ENCODE measurements at regions of chr14 and their contacts with region 1.

Region 1: DNA sequence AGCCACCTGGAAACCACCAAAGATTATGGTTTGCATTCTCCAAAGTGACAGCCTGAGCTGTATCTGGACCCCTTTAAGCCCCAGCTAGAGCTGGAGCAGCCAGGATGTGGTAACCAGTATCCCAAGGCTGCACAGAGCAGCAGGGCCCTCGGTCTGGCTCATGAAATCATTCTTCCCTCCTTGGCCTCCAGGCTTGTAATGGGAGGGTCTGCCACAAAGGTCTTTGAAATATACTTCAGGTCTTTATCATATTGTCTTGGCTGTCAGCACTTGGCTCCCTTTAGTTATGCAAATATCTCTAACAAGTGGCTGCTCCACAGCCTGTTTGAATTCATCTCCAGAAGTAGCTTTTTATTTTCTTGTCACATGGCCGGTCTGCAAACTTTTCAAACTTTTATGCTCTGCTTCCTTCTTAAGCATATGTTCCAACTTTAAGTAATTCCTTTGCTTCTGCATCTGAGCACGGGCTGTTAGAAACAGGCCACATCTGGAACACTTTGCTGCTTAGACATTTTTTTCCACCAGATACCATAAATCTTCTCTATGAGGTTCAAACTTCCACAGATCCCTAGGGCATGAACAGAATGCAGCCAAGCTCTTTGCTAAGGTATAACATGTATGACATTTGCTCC is 663.4 kb upstream of the MIS18BP1 start:
- DNase-seq: no peak
- H3K4me3 ChIP-seq: no peak overlapping the region
- H3K27ac ChIP-seq: no peak overlapping the region
- H3K4me1 ChIP-seq: no peaks in the 10 kb centered on the region; the same call in 1 of the 2 replicates
- H3K27me3 ChIP-seq: no peaks in the 10 kb centered on the region
- CTCF ChIP-seq: no peak

Region 2: DNA sequence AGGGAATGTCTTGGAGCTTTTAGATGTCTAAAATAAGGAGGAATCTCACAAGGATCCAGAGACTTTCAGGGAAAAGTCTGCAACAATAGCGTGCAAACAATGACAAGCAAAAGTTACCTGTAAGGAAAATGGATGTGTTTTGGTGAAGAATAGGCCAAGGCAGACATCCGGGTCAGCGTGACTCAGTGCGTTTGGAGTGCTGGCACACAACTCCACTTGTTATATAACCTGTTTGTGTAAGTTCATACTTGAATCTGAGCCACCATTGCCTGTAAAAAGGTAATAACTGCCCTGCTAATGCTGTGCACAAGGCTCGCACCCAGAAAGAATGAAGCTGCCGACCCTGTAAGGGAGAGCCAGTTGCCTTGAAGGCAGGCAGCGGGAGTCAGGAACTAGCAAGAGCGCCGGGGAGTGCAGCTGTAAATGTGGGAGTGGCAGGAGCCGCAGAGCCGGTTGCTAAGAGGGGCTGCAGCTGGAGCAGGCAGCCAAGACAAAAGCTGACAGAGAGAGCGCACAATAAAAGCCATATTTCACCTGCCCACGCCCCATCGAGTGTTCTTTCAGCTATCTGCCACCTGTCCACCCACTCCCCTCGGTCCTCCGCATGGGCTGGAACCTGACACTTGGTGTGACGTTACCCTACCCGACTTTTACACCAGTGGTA is 24.9 kb before region 1 on chr14:
- CTCF ChIA-PET with region 1: no interaction called
- POLR2A ChIA-PET with region 1: no interaction called
- intact Hi-C with region 1: loop called (anchors 1 kb)
- DNase-seq: peak in 1 of 2 experiments; percentile 26
- H3K4me3 ChIP-seq: no peak overlapping the region
- H3K27ac ChIP-seq: no peak overlapping the region
- H3K4me1 ChIP-seq: no peaks in the 10 kb centered on the region
- H3K27me3 ChIP-seq: no peaks in the 10 kb centered on the region
- CTCF ChIP-seq: no peak

Measured in PC-9 (cell line).